ENCODE measurements at regions of chr10 and their contacts with region 1.

Region 1: GRCh38 chr10:16436758-16437539 is at the start of gene PTER:
- DNase-seq: peak; percentile 100
- H3K4me3 Mint-ChIP-seq: peak within 1 kb of the TSS; percentile 85
- H3K27ac Mint-ChIP-seq: peak within 1 kb of the TSS; percentile 88
- H3K4me1 Mint-ChIP-seq: peaks cover 43% of the 10 kb centered on the region
- H3K27me3 Mint-ChIP-seq: no peaks in the 10 kb centered on the region
- total RNA-seq, gene PTER: 15.0 to 16.7 TPM

Region 2: DNA sequence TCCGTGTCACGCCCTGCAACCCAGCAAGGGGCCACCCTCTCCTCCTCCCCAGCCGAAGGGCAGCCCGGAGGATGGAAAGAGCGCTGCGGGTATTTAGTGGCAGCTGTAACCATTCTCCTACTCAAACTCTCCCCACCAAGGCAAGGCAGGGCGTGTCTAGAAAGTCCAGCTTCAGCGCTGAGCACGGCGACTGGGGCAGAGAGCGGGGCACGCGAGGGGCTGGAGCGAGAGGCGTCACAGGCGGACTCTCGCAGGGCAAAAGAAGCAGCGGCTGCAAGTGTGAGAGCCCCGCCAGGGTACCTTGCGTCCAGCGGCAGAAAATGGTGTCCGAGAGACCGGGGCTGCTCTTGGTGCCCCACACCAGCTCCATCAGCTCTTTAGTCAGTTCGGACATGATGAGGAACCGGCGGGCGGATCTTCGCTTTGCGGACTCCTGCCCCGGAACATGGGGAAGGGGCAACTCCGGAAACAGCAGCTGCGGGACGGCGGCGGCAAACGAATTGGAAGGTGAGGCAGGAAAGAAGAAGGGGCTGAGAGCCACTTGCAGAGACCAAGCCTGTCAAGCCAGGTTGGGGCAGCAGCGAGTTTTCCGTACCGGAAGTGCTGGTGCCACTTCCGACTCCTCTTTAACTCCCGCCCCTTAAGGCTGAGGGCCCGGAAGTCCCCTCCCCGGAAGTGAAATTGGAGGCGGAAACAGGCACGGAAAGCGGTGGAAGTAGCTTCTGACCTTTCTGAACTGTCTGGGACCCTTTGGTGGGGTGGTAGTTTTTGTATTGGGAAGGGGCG is 576.9 kb before region 1 on chr10 and contains the start of gene MINDY3:
- CTCF ChIA-PET with region 1: no interaction called
- intact Hi-C with region 1: loop called (anchors 1 kb)
- DNase-seq: peak; percentile 89
- H3K4me3 Mint-ChIP-seq: peak within 1 kb of the TSS; percentile 99
- H3K27ac Mint-ChIP-seq: peak within 1 kb of the TSS; percentile 90
- H3K4me1 Mint-ChIP-seq: peaks cover 28% of the 10 kb centered on the region
- H3K27me3 Mint-ChIP-seq: peaks cover 9% of the 10 kb centered on the region
- total RNA-seq, gene MINDY3: 9.0 to 12.0 TPM

Region 3: GRCh38 chr10:16195178-16195769 is 241.7 kb before region 1 on chr10:
- CTCF ChIA-PET with region 1: no interaction called
- intact Hi-C with region 1: loop called (anchors 2 kb)
- DNase-seq: peak; percentile 9
- H3K4me3 Mint-ChIP-seq: no peak overlapping the region
- H3K27ac Mint-ChIP-seq: peak overlapping the region; percentile 13
- H3K4me1 Mint-ChIP-seq: peaks cover 11% of the 10 kb centered on the region
- H3K27me3 Mint-ChIP-seq: peaks cover 6% of the 10 kb centered on the region

Region 4: DNA sequence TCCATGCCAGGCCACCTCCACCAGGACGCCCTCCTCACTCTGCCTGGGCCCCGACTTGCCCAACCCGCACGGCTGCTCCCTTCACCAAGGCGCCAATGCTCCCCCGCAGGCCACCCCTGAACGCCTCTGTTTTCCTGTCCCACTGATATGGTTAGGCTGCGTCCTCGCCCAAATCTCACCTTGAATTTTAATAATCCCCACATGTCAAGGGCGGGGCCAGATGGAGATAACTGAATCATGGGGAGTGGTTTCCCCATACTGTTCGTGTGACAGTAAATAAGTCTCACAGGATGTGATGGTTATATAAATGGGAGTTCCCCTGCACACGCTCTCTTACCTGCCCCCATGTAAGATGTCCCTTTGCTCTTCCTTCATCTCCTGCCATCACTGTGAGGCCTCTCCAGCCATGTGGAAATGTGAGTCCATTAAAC is 350.4 kb after region 1 on chr10:
- CTCF ChIA-PET with region 1: no interaction called
- intact Hi-C with region 1: loop called (anchors 1 kb)
- DNase-seq: peak; percentile 88
- H3K4me3 Mint-ChIP-seq: peak overlapping the region; percentile 65
- H3K27ac Mint-ChIP-seq: peak overlapping the region; percentile 91
- H3K4me1 Mint-ChIP-seq: peaks cover 28% of the 10 kb centered on the region
- H3K27me3 Mint-ChIP-seq: no peaks in the 10 kb centered on the region

Region 5: DNA sequence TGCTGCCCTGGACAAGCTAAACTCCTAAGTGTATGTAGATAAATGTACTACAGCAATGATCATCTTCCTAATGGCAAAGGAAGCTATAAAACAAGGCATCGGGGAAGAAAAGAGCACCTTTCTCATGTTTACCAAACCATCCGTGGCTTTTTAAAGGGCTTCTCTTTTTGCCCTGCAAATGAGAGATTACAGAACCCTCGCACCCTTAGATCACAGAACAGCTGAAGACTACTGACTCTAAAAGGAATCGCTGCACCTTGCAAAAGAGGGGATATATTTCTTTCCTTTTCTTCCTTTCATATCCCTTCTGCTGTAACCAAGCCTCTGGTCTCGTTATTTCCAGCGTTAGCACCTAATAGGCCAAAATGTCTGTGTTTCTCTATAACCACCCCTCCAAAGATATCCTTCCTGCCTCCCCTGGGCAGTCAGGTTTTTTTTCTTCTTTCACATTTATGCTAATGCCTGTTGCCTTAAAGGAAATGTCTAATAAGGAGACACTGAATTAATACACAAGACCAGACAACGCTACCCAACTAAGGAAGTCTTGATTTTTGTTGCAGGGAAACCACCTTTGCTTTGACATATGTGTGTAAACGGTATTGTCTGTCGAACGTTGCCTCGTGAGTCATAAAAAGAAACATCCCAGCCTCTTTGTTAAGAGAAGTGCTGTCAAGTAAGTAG is 1006.9 kb after region 1 on chr10:
- CTCF ChIA-PET with region 1: no interaction called
- intact Hi-C with region 1: loop called (anchors 5 kb)
- DNase-seq: peak; percentile 61
- H3K4me3 Mint-ChIP-seq: peak overlapping the region; percentile 46
- H3K27ac Mint-ChIP-seq: peak overlapping the region; percentile 28
- H3K4me1 Mint-ChIP-seq: peaks cover 16% of the 10 kb centered on the region
- H3K27me3 Mint-ChIP-seq: peaks cover 3% of the 10 kb centered on the region